AG04450 (cell line): ENCODE measurements at regions of chr12 and their contacts with region 1.

Region 1: DNA sequence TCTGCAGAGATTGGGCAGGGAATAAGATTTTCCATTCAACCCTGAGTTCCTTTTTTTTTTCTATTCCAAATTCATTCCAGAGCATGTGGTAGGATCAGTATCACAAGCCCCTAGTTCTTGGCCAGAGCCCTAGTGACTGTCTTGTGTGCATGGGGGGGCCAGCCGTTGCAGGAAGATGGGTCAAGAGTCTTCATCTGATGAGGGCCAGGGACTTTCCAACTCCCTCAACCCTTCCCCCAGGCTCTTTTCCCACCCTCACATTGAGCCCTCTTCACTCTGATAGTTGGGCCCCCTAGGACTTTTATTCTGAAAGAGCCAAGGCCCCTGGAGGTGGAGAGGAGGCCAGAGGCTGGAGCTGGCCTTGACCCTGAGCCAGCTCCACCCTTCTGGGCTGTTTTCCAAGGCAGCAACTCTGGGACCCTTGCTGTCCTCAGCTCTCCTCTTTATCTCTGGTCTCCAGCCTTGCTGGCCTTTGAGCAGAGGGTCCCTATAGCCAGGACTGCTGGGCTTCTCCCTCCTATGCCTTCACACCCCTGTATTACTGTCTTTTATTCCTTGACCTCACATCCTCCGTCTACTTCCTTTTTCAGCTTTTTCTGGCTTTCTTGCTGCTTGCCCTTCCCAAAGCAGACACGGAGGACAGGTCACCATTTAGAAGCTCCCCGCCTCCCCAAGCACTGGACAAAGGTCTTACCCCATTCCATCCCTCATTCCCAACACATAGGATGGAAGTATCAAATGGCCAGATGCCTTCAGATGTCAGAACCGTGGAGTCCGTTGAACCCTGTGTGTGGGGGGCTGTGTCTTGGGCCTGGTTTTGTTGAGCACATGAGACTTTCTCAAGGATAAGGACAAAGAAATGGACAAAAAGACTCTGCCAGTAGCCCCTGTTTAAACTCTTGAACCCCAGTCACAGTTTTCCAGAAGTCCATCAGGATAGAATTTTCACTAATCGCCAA is 5.6 kb downstream of the RBP5 start:
- DNase-seq: no peak
- H3K4me3 ChIP-seq: no peak overlapping the region
- H3K27ac ChIP-seq: no peak overlapping the region
- H3K27me3 ChIP-seq: no peaks in the 10 kb centered on the region
- CTCF ChIP-seq: no peak

Region 2: GRCh38 chr12:7026854-7027253 is 96.2 kb before region 1 on chr12:
- CTCF ChIA-PET with region 1: no interaction called
- POLR2A ChIA-PET with region 1: no interaction called
- DNase-seq: no peak
- H3K4me3 ChIP-seq: no peak overlapping the region
- H3K27ac ChIP-seq: no peak overlapping the region
- H3K27me3 ChIP-seq: peaks cover 6% of the 10 kb centered on the region
- CTCF ChIP-seq: no peak

Region 3: GRCh38 chr12:7058163-7058845 is 64.8 kb before region 1 on chr12:
- CTCF ChIA-PET with region 1: no interaction called
- POLR2A ChIA-PET with region 1: no interaction called
- DNase-seq: no peak
- H3K4me3 ChIP-seq: no peak overlapping the region
- H3K27ac ChIP-seq: no peak overlapping the region
- H3K27me3 ChIP-seq: peaks cover 7% of the 10 kb centered on the region
- CTCF ChIP-seq: no peak

Region 4: GRCh38 chr12:7092229-7092985 is 30.7 kb before region 1 on chr12 and contains the start of gene C1R:
- CTCF ChIA-PET with region 1: no interaction called
- POLR2A ChIA-PET with region 1: no interaction called
- DNase-seq: peak; percentile 85
- H3K4me3 ChIP-seq: peak within 1 kb of the TSS; percentile 86
- H3K27ac ChIP-seq: peak within 1 kb of the TSS; percentile 62
- H3K27me3 ChIP-seq: no peaks in the 10 kb centered on the region
- CTCF ChIP-seq: peak; percentile 90
- polyA plus RNA-seq, gene C1R: 617 and 795 TPM in 2 replicates

Region 5: DNA sequence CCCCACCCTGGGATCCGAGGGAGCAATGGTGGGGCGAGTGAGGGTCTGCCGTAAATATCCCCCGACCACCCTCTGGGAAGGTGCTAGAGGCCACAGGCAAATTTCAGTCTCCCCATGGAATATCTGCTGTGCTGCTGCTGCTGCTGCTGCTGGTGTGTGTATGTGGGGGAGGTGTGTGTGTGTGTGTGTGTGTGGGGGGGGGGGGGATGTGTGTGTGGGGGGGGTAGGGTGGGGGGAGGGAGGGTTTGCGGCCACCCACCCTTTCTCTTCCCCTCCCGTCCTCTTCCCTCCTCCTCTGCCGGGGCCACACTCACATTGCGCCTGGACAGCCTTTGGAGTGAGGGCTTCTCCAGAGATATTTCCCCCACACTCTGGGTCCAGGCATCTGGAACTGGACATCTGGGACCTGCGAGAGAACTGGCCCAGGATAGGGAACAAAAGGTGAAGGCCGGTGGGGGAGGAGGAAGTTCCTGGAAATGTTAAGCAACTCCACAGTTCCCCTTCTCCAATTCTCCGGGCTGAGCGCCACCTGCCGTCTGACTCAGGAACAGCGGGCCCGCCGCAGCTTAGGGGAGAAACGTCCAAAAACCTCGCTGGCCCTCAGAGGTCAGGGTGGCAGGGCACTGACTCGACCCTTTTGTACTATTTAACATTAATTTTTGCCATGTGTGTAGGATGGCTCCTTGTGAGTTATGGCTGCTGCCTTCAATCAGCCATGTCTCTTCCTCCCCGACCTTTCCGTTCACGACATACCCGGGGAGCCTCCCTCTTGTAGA is 14.1 kb before region 1 on chr12 and contains the start of gene C1RL:
- CTCF ChIA-PET with region 1: interaction called, 26 read pairs
- POLR2A ChIA-PET with region 1: no interaction called
- DNase-seq: no peak
- H3K4me3 ChIP-seq: peak within 1 kb of the TSS; percentile 82
- H3K27ac ChIP-seq: peak within 1 kb of the TSS; percentile 96
- H3K27me3 ChIP-seq: no peaks in the 10 kb centered on the region
- CTCF ChIP-seq: peak; percentile 97
- polyA plus RNA-seq, gene C1RL: 45.3 and 58.7 TPM in 2 replicates